ENCODE measurements at regions of chr7 and their contacts with region 1.

Region 1: GRCh38 chr7:90777465-90777864 is 181.3 kb downstream of the CDK14 start:
- DNase-seq: no peak
- H3K4me3 ChIP-seq: no peak overlapping the region
- H3K27ac ChIP-seq: peak overlapping the region; percentile 91
- H3K4me1 ChIP-seq: peaks cover 35% of the 10 kb centered on the region
- H3K27me3 ChIP-seq: no peaks in the 10 kb centered on the region
- CTCF ChIP-seq: no peak

Region 2: GRCh38 chr7:90119178-90119971 is 658.1 kb before region 1 on chr7:
- CTCF ChIA-PET with region 1: no interaction called
- POLR2A ChIA-PET with region 1: no interaction called
- intact Hi-C with region 1: no loop called
- DNase-seq: peak; percentile 63
- H3K4me3 ChIP-seq: peak overlapping the region; percentile 51
- H3K27ac ChIP-seq: no peak overlapping the region
- H3K4me1 ChIP-seq: no peaks in the 10 kb centered on the region
- H3K27me3 ChIP-seq: peaks cover 17% of the 10 kb centered on the region
- CTCF ChIP-seq: no peak

Region 3: GRCh38 chr7:90595801-90596671 is 181.4 kb before region 1 on chr7 and contains the start of gene CDK14:
- CTCF ChIA-PET with region 1: no interaction called
- POLR2A ChIA-PET with region 1: interaction called, 3 read pairs
- intact Hi-C with region 1: loop called (anchors 1 kb)
- DNase-seq: peak; percentile 86
- H3K4me3 ChIP-seq: peak within 1 kb of the TSS; percentile 69
- H3K27ac ChIP-seq: peak within 1 kb of the TSS; percentile 94
- H3K4me1 ChIP-seq: peaks cover 46% of the 10 kb centered on the region
- H3K27me3 ChIP-seq: no peaks in the 10 kb centered on the region
- CTCF ChIP-seq: peak; percentile 43
- total RNA-seq, gene CDK14: 128 and 131 TPM in 2 replicates

Region 4: DNA sequence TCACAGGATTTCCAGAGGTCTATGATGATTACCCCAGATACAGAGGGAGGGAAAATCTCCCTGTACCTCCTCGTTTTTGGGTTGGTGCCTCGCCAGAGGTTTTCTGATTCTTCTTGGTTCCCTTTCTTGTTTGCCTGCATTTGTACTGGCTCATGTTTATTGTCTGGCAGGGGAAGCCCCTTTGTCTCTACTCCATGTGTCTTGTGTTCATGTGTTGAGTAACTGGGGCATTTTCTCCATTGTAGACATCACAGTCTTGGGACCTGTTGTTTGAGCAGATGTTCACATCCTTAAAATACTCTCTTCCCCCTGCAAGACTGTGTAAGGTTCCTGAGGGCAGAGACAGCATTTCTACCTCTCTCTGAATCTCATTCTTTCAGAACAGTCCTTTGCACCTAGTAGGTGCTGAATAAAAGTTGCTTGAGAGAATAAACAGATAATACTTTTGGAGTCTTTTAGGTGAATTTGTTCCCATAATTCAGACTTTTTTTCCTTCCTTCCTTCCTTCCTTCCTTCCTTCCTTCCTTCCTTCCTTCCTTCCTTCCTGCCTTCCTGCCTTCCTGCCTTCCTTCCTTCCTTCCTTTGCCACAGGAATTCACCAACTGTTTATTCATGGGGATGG is 156.2 kb before region 1 on chr7:
- CTCF ChIA-PET with region 1: no interaction called
- POLR2A ChIA-PET with region 1: interaction called, 8 read pairs
- intact Hi-C with region 1: loop called (anchors 1 kb)
- DNase-seq: peak; percentile 93
- H3K4me3 ChIP-seq: no peak overlapping the region
- H3K27ac ChIP-seq: peak overlapping the region; percentile 97
- H3K4me1 ChIP-seq: peaks cover 97% of the 10 kb centered on the region
- H3K27me3 ChIP-seq: no peaks in the 10 kb centered on the region
- CTCF ChIP-seq: no peak

Region 5: DNA sequence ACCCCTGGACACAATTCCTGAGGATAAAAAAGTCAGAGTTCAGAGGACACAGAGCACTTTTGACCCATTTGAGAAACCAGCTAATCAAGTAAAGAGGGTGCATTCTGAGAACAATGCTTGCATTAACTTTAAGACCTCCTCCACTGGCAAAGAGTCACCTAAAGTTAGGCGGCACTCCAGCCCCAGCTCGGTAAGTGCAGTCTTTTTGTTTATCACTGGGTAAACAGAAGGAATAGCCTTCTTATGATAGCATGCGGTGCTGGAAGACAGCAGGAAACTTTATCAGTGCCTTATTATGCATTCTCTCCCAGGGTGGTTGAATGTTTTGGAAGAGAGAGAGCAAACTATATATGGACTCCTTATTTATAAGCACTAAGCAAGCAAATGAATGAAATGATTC is 50.8 kb before region 1 on chr7:
- CTCF ChIA-PET with region 1: no interaction called
- POLR2A ChIA-PET with region 1: no interaction called
- intact Hi-C with region 1: loop called (anchors 5 kb)
- DNase-seq: peak; percentile 82
- H3K4me3 ChIP-seq: peak overlapping the region; percentile 4
- H3K27ac ChIP-seq: peak overlapping the region; percentile 66
- H3K4me1 ChIP-seq: peaks cover 63% of the 10 kb centered on the region
- H3K27me3 ChIP-seq: no peaks in the 10 kb centered on the region
- CTCF ChIP-seq: no peak

Region 6: DNA sequence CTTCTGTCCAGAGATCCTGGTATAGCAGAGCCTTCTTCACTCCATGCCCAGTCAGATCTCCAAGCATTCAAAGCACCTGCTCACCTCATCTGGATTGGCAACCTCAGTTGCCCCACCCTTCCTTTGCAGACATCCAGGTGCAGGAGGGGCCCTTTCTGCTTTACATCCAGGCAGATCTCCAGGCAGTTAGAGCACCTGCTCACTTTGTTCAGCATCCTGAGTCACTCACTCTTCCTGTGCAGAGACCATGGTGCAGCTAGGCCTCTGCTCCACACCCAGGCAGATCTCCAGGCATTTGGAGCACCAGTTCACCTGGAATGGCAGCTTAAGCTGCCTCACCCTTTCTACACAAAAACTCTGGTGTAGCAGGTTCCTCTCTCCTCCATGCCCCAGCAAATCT is 28.2 kb before region 1 on chr7:
- CTCF ChIA-PET with region 1: no interaction called
- POLR2A ChIA-PET with region 1: no interaction called
- intact Hi-C with region 1: no loop called
- DNase-seq: no peak
- H3K4me3 ChIP-seq: no peak overlapping the region
- H3K27ac ChIP-seq: no peak overlapping the region
- H3K4me1 ChIP-seq: peaks cover 23% of the 10 kb centered on the region
- H3K27me3 ChIP-seq: no peaks in the 10 kb centered on the region
- CTCF ChIP-seq: no peak